ENCODE measurements at regions of chr2 and their contacts with region 1.

Region 1: DNA sequence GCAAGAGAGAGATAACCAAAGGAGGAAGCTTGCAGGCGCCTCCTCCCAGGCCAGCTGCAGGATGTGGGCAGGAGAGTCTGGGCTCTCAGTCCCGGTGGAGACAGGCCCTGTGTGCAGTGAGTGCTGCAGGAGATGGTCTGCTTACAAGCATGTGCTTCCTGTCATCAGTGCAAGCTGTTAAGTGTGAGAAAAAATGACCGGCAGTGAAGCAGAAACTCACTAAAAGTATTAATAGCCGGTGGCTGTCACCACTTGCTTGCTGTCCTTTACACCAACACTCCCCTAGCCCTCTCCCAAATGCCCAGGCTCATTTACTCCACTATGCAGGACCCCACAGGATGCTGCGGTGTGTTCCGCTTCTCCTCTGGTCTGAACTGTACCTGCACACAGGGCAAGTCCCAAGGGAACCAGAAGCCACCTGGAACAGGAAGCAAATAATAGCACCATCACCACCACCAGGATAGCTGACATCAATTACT is 435.6 kb upstream of the HS6ST1 start:
- DNase-seq: no peak
- ATAC-seq: no peak
- H3K4me3 ChIP-seq: no peak overlapping the region
- H3K27ac ChIP-seq: no peak overlapping the region
- H3K4me1 ChIP-seq: no peaks in the 10 kb centered on the region
- H3K27me3 ChIP-seq: peaks cover 15% of the 10 kb centered on the region
- CTCF ChIP-seq: no peak
- POLR2A ChIP-seq: no peak
- RAD21 ChIP-seq: no peak

Region 2: DNA sequence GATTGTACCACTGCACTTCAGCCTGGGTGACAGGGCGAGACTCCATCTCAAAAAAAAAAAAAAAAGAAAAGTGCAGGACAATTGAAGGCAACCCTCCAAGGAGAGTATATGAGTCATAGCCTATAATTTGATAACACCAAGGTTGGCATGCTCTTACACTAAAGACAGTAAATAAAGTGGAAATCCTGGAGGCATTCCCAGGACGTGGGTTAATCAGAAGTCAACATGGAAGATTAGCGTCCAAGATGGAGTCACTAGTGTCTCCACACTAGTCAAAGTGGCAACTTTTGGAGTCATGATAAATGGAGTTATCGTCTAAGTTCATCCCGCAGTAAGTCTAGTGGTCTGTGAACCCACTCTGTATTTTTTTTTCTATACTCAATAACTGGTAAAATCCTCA is 684.5 kb before region 1 on chr2:
- CTCF ChIA-PET with region 1: no interaction called
- POLR2A ChIA-PET with region 1: no interaction called
- dilution Hi-C with region 1: no loop called
- in situ Hi-C with region 1: loop called (anchors 25 kb)
- intact Hi-C with region 1: loop called (anchors 10 kb)
- DNase-seq: peak; percentile 59
- ATAC-seq: peak; percentile 42
- H3K4me3 ChIP-seq: no peak overlapping the region
- H3K27ac ChIP-seq: no peak overlapping the region
- H3K4me1 ChIP-seq: no peaks in the 10 kb centered on the region
- H3K27me3 ChIP-seq: 0 out of 2 replicates have a peak, but pooled peaks cover 2% of the 10 kb centered on the region
- CTCF ChIP-seq: no peak
- POLR2A ChIP-seq: no peak
- RAD21 ChIP-seq: no peak

Region 3: GRCh38 chr2:128623776-128624424 is 130.4 kb before region 1 on chr2:
- CTCF ChIA-PET with region 1: no interaction called
- POLR2A ChIA-PET with region 1: no interaction called
- dilution Hi-C with region 1: no loop called
- in situ Hi-C with region 1: no loop called
- intact Hi-C with region 1: loop called (anchors 1 kb)
- DNase-seq: peak; percentile 95
- ATAC-seq: peak; percentile 80
- H3K4me3 ChIP-seq: no peak overlapping the region
- H3K27ac ChIP-seq: peak overlapping the region; percentile 91
- H3K4me1 ChIP-seq: peaks cover 34% of the 10 kb centered on the region
- H3K27me3 ChIP-seq: peaks cover 3% of the 10 kb centered on the region; the same call in 1 of the 2 replicates
- CTCF ChIP-seq: no peak
- POLR2A ChIP-seq: no peak
- RAD21 ChIP-seq: no peak

Region 4: DNA sequence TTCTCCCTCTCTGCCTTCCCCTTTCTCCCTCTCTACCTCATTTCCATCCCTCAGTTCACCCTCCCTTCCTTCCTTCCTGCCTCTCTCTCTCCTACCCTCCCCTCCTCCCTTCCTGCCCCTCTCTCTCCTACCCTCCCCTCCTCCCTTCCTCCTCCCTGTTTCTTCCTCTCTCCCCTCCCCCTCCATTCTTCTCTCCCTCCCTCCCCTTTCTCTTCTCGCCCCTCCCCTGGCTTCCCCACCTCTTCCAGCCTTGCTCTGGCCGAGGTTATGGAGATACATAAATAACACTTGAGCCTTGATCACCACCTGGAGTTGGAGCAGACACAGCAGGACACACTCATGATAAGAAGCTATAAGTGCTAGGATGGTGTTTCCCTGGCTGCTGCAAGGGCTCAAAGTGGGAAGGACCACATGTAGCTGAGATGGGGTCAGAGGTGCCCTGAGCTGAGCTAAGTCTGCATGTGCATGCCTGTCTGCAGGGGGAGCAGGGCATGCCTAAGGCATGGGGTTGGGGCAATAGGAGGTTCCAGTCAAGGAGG is 109.5 kb before region 1 on chr2:
- CTCF ChIA-PET with region 1: no interaction called
- POLR2A ChIA-PET with region 1: no interaction called
- dilution Hi-C with region 1: no loop called
- in situ Hi-C with region 1: no loop called
- intact Hi-C with region 1: no loop called
- DNase-seq: no peak
- ATAC-seq: 0 out of 2 replicates have a peak, but pooled peaks have one; percentile 29
- H3K4me3 ChIP-seq: no peak overlapping the region
- H3K27ac ChIP-seq: no peak overlapping the region
- H3K4me1 ChIP-seq: no peaks in the 10 kb centered on the region; the same call in none of the 2 replicates
- H3K27me3 ChIP-seq: peaks cover 31% of the 10 kb centered on the region
- CTCF ChIP-seq: no peak
- POLR2A ChIP-seq: no peak
- RAD21 ChIP-seq: no peak